ENCODE measurements at regions of chr12 and their contacts with region 1.

Region 1: DNA sequence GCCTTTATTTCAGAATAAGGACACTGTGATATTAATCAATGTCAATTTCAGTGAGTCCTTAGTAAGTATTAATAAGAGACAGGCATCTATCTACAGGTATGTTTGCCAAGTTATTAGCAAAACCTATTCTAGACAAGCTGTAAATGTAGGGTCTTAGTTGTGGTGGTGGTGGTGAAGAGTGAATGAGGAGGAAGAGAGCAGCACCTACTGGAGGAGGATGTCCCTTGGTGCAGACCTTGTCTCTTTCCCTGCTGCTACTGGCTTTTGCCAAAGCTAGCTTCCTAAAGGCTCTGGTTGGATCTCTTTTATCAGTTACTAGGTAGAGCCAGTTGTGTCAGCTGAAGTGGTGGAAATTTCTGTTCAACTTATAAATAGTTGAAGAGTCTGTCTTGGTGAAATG is 304.8 kb upstream of the ATP2B1 start:
- DNase-seq: peak; percentile 64
- ATAC-seq: peak; percentile 95
- H3K4me3 ChIP-seq: no peak overlapping the region
- H3K4me3 Mint-ChIP-seq: no peak overlapping the region
- H3K27ac ChIP-seq: no peak overlapping the region
- H3K27ac Mint-ChIP-seq: peak overlapping the region; percentile 33
- H3K4me1 ChIP-seq: no peaks in the 10 kb centered on the region
- H3K4me1 Mint-ChIP-seq: peaks cover 14% of the 10 kb centered on the region
- H3K27me3 ChIP-seq: no peaks in the 10 kb centered on the region
- H3K27me3 Mint-ChIP-seq: no peaks in the 10 kb centered on the region
- CTCF ChIP-seq: peak; percentile 60

Region 2: DNA sequence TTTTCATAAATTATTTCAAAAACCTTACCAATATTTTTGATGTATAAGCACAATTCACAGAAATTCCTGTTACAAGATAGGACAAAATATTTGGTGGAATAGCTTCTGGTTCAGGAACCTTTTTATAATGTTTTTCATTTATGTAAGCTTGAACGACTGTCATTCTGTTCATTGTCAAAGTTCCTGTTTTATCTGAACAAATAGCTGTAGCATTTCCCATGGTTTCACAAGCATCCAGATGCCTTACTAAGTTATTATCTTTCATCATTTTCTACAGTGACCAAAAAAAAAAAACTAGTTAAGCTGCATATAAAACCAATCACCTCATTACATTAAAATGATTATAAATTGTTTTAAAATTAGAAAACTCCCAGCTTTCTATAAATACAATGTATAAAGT is 391.9 kb before region 1 on chr12:
- CTCF ChIA-PET with region 1: interaction called, 6 read pairs
- POLR2A ChIA-PET with region 1: no interaction called
- intact Hi-C with region 1: loop called (anchors 5 kb)
- DNase-seq: no peak
- ATAC-seq: no peak
- H3K4me3 ChIP-seq: no peak overlapping the region
- H3K4me3 Mint-ChIP-seq: no peak overlapping the region
- H3K27ac ChIP-seq: no peak overlapping the region
- H3K27ac Mint-ChIP-seq: no peak overlapping the region
- H3K4me1 ChIP-seq: no peaks in the 10 kb centered on the region
- H3K4me1 Mint-ChIP-seq: no peaks in the 10 kb centered on the region
- H3K27me3 ChIP-seq: no peaks in the 10 kb centered on the region
- H3K27me3 Mint-ChIP-seq: no peaks in the 10 kb centered on the region
- CTCF ChIP-seq: no peak

Region 3: GRCh38 chr12:89636052-89636775 is 377.2 kb before region 1 on chr12:
- CTCF ChIA-PET with region 1: interaction called, 22 read pairs
- POLR2A ChIA-PET with region 1: no interaction called
- intact Hi-C with region 1: no loop called
- DNase-seq: no peak
- ATAC-seq: no peak
- H3K4me3 ChIP-seq: no peak overlapping the region
- H3K4me3 Mint-ChIP-seq: no peak overlapping the region
- H3K27ac ChIP-seq: peak overlapping the region in 1 of 2 donors; percentile 25
- H3K27ac Mint-ChIP-seq: no peak overlapping the region
- H3K4me1 ChIP-seq: no peaks in the 10 kb centered on the region
- H3K4me1 Mint-ChIP-seq: peaks cover 13% of the 10 kb centered on the region
- H3K27me3 ChIP-seq: no peaks in the 10 kb centered on the region
- H3K27me3 Mint-ChIP-seq: no peaks in the 10 kb centered on the region
- CTCF ChIP-seq: no peak

Region 4: DNA sequence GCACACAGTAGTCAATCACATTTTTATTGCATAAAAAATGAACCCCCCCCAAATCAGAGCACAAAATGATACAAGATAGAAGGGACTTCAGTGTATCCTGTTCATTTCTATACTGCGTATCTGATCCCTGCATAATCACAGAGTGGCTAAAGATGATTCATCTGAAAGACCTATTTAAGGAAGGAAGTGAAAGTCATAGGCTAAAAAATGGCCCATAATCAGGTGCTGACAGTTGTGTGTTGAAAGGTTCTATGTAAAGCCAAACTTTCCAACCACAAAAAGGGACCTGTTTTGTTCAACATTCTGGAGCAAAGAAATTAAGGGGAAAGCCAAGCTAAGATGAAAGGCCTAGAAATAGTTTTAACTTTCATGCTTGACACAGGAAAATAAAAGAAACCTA is 157.0 kb before region 1 on chr12:
- CTCF ChIA-PET with region 1: interaction called, 5 read pairs
- POLR2A ChIA-PET with region 1: no interaction called
- intact Hi-C with region 1: loop called (anchors 5 kb)
- DNase-seq: peak; percentile 71
- ATAC-seq: peak; percentile 88
- H3K4me3 ChIP-seq: peak overlapping the region in 1 of 5 experiments; percentile 21
- H3K4me3 Mint-ChIP-seq: peak overlapping the region; percentile 64
- H3K27ac ChIP-seq: no peak overlapping the region
- H3K27ac Mint-ChIP-seq: peak overlapping the region; percentile 76
- H3K4me1 ChIP-seq: peaks cover 45 to 46% of the 10 kb centered on the region in 2 donors
- H3K4me1 Mint-ChIP-seq: peaks cover 50% of the 10 kb centered on the region
- H3K27me3 ChIP-seq: no peaks in the 10 kb centered on the region
- H3K27me3 Mint-ChIP-seq: no peaks in the 10 kb centered on the region
- CTCF ChIP-seq: no peak

Region 5: GRCh38 chr12:89901906-89902642 is 111.3 kb before region 1 on chr12:
- CTCF ChIA-PET with region 1: no interaction called
- POLR2A ChIA-PET with region 1: no interaction called
- intact Hi-C with region 1: no loop called
- DNase-seq: no peak
- ATAC-seq: no peak
- H3K4me3 ChIP-seq: no peak overlapping the region
- H3K4me3 Mint-ChIP-seq: no peak overlapping the region
- H3K27ac ChIP-seq: no peak overlapping the region
- H3K27ac Mint-ChIP-seq: no peak overlapping the region
- H3K4me1 ChIP-seq: peaks cover 4 to 8% of the 10 kb centered on the region in 2 donors
- H3K4me1 Mint-ChIP-seq: peaks cover 11% of the 10 kb centered on the region
- H3K27me3 ChIP-seq: no peaks in the 10 kb centered on the region
- H3K27me3 Mint-ChIP-seq: no peaks in the 10 kb centered on the region
- CTCF ChIP-seq: no peak